Naive thymus-derived CD4-positive, alpha-beta T cell (primary cell): ENCODE measurements at regions of chr3 and their contacts with region 1.

Region 1: GRCh38 chr3:172106989-172107388 is 67.6 kb downstream of the FNDC3B start:
- DNase-seq: peak in 8 of 9 donors; percentile 57 to 89 (median 84)
- ATAC-seq: peak; percentile 80
- H3K4me3 ChIP-seq: peak overlapping the region; percentile 45
- H3K4me3 Mint-ChIP-seq: peak overlapping the region; percentile 78 to 89 (median 84)
- H3K27ac ChIP-seq: peak overlapping the region; percentile 54
- H3K27ac Mint-ChIP-seq: peak overlapping the region; percentile 88 to 94 (median 91)
- H3K4me1 ChIP-seq: peaks cover 44 to 73% of the 10 kb centered on the region in 2 donors
- H3K4me1 Mint-ChIP-seq: peaks cover 65 to 91% (median 82%) of the 10 kb centered on the region in 7 donors
- H3K27me3 ChIP-seq: no peaks in the 10 kb centered on the region
- H3K27me3 Mint-ChIP-seq: peaks cover 0 to 8% (median 0%) of the 10 kb centered on the region in 5 donors

Region 2: GRCh38 chr3:171257251-171258203 is 849.5 kb before region 1 on chr3:
- CTCF ChIA-PET with region 1: no interaction called
- POLR2A ChIA-PET with region 1: no interaction called
- intact Hi-C with region 1: loop called in 1 of 2 experiments (anchors 10 kb)
- DNase-seq: peak in 3 of 9 donors; percentile 13 to 36 (median 33)
- ATAC-seq: peak; percentile 45
- H3K4me3 ChIP-seq: no peak overlapping the region
- H3K4me3 Mint-ChIP-seq: peak overlapping the region; percentile 16 to 70 (median 59)
- H3K27ac ChIP-seq: peak overlapping the region; percentile 70
- H3K27ac Mint-ChIP-seq: peak overlapping the region in 8 of 9 donors; percentile 91 to 99 (median 94)
- H3K4me1 ChIP-seq: peaks cover 53 to 70% of the 10 kb centered on the region in 2 donors
- H3K4me1 Mint-ChIP-seq: peaks cover 59 to 100% (median 93%) of the 10 kb centered on the region in 7 donors
- H3K27me3 ChIP-seq: no peaks in the 10 kb centered on the region
- H3K27me3 Mint-ChIP-seq: no peaks in the 10 kb centered on the region

Region 3: DNA sequence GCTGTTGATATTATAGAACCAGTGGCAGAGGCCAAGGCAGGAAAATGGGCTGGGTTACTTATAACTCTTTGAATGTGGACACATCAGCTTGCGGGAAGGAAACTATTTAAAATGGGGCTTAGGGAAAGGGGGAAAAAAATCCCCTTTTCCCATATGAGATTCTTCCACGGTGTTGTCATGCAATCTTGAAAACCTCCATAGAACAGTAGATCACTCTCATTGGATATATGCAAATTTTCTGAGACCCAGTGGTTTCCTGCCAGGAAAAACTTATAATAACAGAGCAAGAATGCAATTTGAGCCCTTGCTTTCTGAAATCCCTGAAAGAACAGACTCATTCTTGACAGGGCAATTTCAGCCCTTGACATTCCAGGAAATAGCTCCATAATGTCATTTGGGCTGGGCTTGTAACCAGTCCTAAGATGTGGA is 232.7 kb before region 1 on chr3:
- CTCF ChIA-PET with region 1: no interaction called
- POLR2A ChIA-PET with region 1: no interaction called
- intact Hi-C with region 1: no loop called
- DNase-seq: no peak
- ATAC-seq: no peak
- H3K4me3 ChIP-seq: no peak overlapping the region
- H3K4me3 Mint-ChIP-seq: no peak overlapping the region
- H3K27ac ChIP-seq: no peak overlapping the region
- H3K27ac Mint-ChIP-seq: no peak overlapping the region
- H3K4me1 ChIP-seq: no peaks in the 10 kb centered on the region
- H3K4me1 Mint-ChIP-seq: peaks cover 0 to 3% (median 0%) of the 10 kb centered on the region in 7 donors
- H3K27me3 ChIP-seq: no peaks in the 10 kb centered on the region
- H3K27me3 Mint-ChIP-seq: peaks cover 0 to 14% (median 9%) of the 10 kb centered on the region in 5 donors

Region 4: DNA sequence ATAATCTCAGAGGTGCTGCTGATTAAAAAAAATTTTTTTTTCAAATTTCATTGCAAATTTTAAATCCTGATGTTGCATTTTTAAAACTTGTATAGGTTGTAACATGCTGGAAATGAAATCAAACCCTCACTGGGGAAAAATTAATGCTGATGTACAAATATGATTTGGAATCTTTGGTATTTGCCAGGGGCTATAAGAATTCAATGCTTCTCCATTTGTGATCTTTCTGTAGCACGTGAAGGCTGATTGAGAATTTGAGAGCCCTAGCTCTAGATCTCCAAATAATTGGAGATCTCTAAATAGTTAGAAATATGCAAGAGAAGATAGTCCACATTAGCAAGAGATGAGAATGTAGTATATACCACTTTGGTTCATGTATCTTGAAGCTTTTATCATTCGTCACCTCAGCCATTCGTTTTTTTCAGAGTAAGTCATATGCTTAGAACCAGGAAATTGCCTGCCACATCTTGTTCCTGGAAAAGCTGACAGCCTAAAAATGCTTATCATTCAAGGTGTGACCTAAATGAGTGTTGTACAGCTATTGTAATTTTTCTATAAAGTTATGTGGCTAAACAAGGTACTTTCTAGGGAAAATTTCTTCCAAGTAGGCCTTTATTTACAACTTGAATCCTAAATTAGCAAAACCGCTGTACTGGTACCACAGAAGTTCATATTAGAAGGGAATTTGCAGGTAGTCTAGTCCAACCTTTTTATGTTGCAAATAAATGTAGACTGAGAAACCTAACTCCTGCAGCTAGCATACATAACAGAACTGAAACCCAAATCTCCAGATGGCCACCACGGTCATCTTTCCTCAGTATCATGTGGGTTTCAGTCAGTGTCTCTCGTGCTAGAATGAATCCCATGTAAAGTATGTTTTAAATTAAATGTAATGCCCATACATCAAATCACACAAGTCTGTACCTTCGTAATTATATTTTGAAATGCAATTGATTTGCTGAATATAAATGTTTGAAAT is 19.1 kb before region 1 on chr3:
- CTCF ChIA-PET with region 1: interaction called, 3 read pairs
- POLR2A ChIA-PET with region 1: interaction called, 8 read pairs
- intact Hi-C with region 1: loop called in 1 of 2 experiments (anchors 2 kb)
- DNase-seq: no peak
- ATAC-seq: no peak
- H3K4me3 ChIP-seq: no peak overlapping the region
- H3K4me3 Mint-ChIP-seq: peak overlapping the region in 6 of 10 donors; percentile 22 to 79 (median 32)
- H3K27ac ChIP-seq: no peak overlapping the region
- H3K27ac Mint-ChIP-seq: peak overlapping the region in 5 of 9 donors; percentile 11 to 85 (median 56)
- H3K4me1 ChIP-seq: peaks cover 0 to 13% of the 10 kb centered on the region in 2 donors
- H3K4me1 Mint-ChIP-seq: peaks cover 14 to 58% (median 37%) of the 10 kb centered on the region in 7 donors
- H3K27me3 ChIP-seq: no peaks in the 10 kb centered on the region
- H3K27me3 Mint-ChIP-seq: no peaks in the 10 kb centered on the region

Region 5: GRCh38 chr3:172121981-172122380 is 15.0 kb after region 1 on chr3:
- CTCF ChIA-PET with region 1: interaction called, 5 read pairs
- POLR2A ChIA-PET with region 1: interaction called, 3 read pairs
- intact Hi-C with region 1: loop called in 1 of 2 experiments (anchors 2 kb)
- DNase-seq: no peak
- ATAC-seq: no peak
- H3K4me3 ChIP-seq: no peak overlapping the region
- H3K4me3 Mint-ChIP-seq: no peak overlapping the region
- H3K27ac ChIP-seq: no peak overlapping the region
- H3K27ac Mint-ChIP-seq: no peak overlapping the region
- H3K4me1 ChIP-seq: no peaks in the 10 kb centered on the region
- H3K4me1 Mint-ChIP-seq: peaks cover 13 to 46% (median 30%) of the 10 kb centered on the region in 7 donors
- H3K27me3 ChIP-seq: no peaks in the 10 kb centered on the region
- H3K27me3 Mint-ChIP-seq: no peaks in the 10 kb centered on the region

Region 6: GRCh38 chr3:172332256-172333041 is 225.5 kb after region 1 on chr3:
- CTCF ChIA-PET with region 1: interaction called, 5 read pairs
- POLR2A ChIA-PET with region 1: no interaction called
- intact Hi-C with region 1: loop called in 1 of 2 experiments (anchors 5 kb)
- DNase-seq: peak; percentile 3 to 55 (median 41)
- ATAC-seq: peak; percentile 92
- H3K4me3 ChIP-seq: no peak overlapping the region
- H3K4me3 Mint-ChIP-seq: no peak overlapping the region
- H3K27ac ChIP-seq: no peak overlapping the region
- H3K27ac Mint-ChIP-seq: peak overlapping the region in 2 of 9 donors; percentile 12 to 36
- H3K4me1 ChIP-seq: no peaks in the 10 kb centered on the region
- H3K4me1 Mint-ChIP-seq: peaks cover 0 to 10% (median 4%) of the 10 kb centered on the region in 7 donors
- H3K27me3 ChIP-seq: no peaks in the 10 kb centered on the region
- H3K27me3 Mint-ChIP-seq: no peaks in the 10 kb centered on the region

Region 7: DNA sequence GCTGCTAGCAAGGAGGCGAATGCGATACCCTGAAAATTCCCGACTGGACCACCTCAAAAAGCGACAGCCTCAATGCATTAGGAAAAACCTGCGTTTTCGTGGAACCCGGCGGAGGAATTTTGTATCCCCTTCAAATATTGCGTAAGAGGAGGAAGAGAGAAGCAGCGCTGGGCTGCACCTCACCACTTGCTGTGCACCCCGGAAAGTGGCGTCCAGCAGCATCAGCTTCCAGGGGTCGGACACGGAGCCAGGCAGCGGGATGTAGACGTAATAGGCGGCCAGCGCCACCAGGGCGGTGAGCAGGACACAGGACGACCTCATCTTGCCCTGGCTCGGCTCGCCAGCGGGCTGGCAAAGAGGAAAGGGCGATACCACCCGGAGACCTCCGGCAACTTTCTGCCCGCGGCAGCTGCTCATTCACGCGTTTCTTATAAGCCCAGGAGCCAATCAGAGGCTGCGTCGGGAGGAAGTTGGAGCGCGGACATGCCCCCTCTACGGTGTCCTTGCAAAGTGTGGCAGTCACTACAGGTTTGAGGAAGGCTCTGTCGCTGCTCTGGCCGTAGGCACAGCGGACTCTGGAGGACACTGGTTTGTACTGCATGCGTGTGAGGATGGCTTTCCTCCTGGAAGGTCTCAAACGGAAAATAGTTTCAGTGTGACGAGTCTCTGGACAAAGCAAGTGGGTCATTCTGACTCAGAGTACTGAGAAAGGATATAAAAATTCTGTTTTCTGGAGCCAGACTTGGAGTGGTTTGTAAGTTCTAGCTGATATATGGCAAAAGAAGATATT is 603.9 kb after region 1 on chr3 and contains the start of gene NCEH1:
- CTCF ChIA-PET with region 1: no interaction called
- POLR2A ChIA-PET with region 1: no interaction called
- intact Hi-C with region 1: loop called in 1 of 2 experiments (anchors 2 kb)
- DNase-seq: peak; percentile 35 to 68 (median 58)
- ATAC-seq: peak; percentile 99
- H3K4me3 ChIP-seq: peak within 1 kb of the TSS; percentile 90
- H3K4me3 Mint-ChIP-seq: peak within 1 kb of the TSS; percentile 93 to 98 (median 97)
- H3K27ac ChIP-seq: peak within 1 kb of the TSS; percentile 45
- H3K27ac Mint-ChIP-seq: peak within 1 kb of the TSS; percentile 53 to 95 (median 82)
- H3K4me1 ChIP-seq: peaks cover 5 to 13% of the 10 kb centered on the region in 2 donors
- H3K4me1 Mint-ChIP-seq: peaks cover 12 to 26% (median 21%) of the 10 kb centered on the region in 7 donors
- H3K27me3 ChIP-seq: no peaks in the 10 kb centered on the region
- H3K27me3 Mint-ChIP-seq: peaks cover 0 to 17% (median 0%) of the 10 kb centered on the region in 5 donors
- total RNA-seq, gene NCEH1: 3.2 to 8.9 (median 4.8) TPM